Sigmoid colon (tissue), 7 donors: ENCODE measurements at regions of chr15 and their contacts with region 1.

Region 1: DNA sequence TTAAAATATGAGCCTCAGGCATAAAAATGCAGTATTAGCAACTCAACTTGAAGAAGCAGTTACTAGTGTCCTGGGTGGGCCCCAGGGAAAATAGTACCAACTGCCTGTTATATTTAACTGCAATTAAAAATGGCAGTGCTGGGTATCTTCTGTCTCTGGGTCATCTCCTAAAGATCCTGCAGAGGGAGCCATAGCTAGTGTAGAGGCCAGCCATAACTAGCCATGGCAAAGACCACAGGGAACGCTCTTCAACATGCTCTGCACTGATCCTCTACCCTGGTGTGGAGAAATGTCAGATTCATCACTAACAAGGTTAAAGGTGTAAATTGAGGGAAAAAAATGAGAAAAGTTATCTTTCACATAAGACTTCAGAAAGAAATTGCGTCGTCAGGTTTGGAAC is 181.3 kb downstream of the SNRPN start:
- DNase-seq: no peak
- H3K4me3 ChIP-seq: no peak overlapping the region
- H3K27ac ChIP-seq: no peak overlapping the region
- H3K4me1 ChIP-seq: no peaks in the 10 kb centered on the region
- H3K27me3 ChIP-seq: no peaks in the 10 kb centered on the region
- CTCF ChIP-seq: no peak
- EP300 ChIP-seq: no peak
- POLR2A ChIP-seq: no peak

Region 2: GRCh38 chr15:24645627-24646026 is 490.5 kb before region 1 on chr15:
- intact Hi-C with region 1: no loop called
- DNase-seq: no peak
- H3K4me3 ChIP-seq: no peak overlapping the region
- H3K27ac ChIP-seq: no peak overlapping the region
- H3K4me1 ChIP-seq: no peaks in the 10 kb centered on the region
- H3K27me3 ChIP-seq: no peaks in the 10 kb centered on the region
- CTCF ChIP-seq: no peak
- EP300 ChIP-seq: no peak
- POLR2A ChIP-seq: no peak

Region 3: GRCh38 chr15:25481207-25481859 is 345.2 kb after region 1 on chr15:
- intact Hi-C with region 1: loop called (anchors 10 kb)
- DNase-seq: no peak
- H3K4me3 ChIP-seq: peak overlapping the region in 2 of 4 donors; percentile 28 to 33
- H3K27ac ChIP-seq: peak overlapping the region in 1 of 4 donors; percentile 44
- H3K4me1 ChIP-seq: peaks cover 0 to 11% (median 4%) of the 10 kb centered on the region in 4 donors
- H3K27me3 ChIP-seq: no peaks in the 10 kb centered on the region
- CTCF ChIP-seq: no peak
- EP300 ChIP-seq: no peak
- POLR2A ChIP-seq: no peak